ENCODE measurements at regions of chr2 and their contacts with region 1.

Region 1: DNA sequence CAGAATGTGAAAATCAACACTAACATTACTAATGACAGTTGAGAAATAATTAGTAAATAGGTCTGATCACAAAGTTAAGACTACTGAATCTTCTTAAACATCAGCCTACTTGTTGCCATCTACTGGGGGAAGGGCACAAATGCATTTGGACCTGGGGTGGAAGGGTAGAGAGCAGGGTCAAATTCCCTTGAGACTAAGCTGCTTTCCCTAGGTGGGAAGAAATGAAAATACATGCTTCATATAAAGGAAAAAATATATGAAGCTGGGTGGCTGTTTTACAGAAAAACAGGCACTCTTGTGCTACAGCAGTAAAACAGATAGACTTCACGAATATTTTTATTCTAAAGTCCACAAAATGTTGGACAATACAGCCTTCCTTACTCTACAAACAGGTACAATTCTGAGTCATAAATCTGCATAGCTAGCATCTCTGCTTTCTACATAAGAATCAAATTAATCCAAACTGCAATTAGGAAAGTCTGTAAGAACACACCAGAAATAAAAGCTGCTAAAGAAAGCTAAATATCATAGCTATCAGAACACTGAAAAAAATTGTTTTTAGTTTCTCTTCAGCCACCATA is 10.9 kb downstream of the TRIP12 start:
- DNase-seq: no peak
- ATAC-seq: peak; percentile 45; the same call in 1 of the 2 replicates
- H3K4me3 ChIP-seq: no peak overlapping the region
- H3K27ac ChIP-seq: no peak overlapping the region
- H3K4me1 ChIP-seq: peaks cover 7% of the 10 kb centered on the region; the same call in 1 of the 2 replicates
- H3K27me3 ChIP-seq: no peaks in the 10 kb centered on the region
- CTCF ChIP-seq: 0 out of 2 replicates have a peak, but pooled peaks have one; percentile 9
- POLR2A ChIP-seq: no peak
- RAD21 ChIP-seq: no peak

Region 2: DNA sequence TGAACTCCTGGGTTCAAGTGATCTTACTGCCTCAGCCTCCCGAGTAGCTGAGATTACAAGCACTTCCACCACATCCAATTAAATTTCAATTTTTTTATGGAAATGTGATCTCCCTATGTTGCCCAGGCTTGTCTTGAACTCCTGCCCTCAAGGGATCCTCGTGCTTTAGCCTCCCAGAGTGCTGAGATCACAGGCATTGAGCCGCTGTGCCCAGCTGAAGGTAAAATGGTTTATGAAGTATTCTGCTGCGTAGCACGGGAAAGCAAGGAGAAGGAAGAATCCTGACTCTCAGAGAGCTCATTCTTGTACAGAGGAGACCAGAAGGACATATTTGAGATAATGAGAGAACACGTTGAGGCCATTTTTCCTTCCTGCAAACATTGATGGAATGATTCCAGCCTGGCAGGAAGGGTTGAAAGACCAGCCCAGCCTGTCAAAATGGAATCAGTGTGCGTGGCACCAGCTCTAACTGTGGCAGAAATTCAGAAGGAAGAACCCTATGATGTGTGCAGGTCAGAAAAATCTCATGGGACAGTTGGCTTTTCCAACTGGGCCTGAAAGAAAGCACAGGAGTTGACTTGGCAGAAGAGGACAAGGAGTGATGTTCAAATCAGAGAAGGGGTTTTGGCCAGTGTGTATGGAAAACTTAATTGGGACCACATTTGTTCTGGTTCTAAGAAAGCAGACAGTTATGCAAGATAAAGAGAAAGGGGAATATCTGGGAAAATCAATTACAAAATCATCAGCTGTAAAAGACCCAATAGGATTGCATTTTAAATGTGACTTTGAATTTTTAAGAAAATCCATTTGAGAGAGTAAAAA is 447.2 kb before region 1 on chr2:
- CTCF ChIA-PET with region 1: no interaction called
- POLR2A ChIA-PET with region 1: no interaction called
- dilution Hi-C with region 1: no loop called
- in situ Hi-C with region 1: no loop called
- intact Hi-C with region 1: no loop called
- DNase-seq: no peak
- ATAC-seq: no peak
- H3K4me3 ChIP-seq: no peak overlapping the region
- H3K27ac ChIP-seq: no peak overlapping the region
- H3K4me1 ChIP-seq: no peaks in the 10 kb centered on the region
- H3K27me3 ChIP-seq: no peaks in the 10 kb centered on the region
- CTCF ChIP-seq: no peak
- POLR2A ChIP-seq: no peak
- RAD21 ChIP-seq: no peak

Region 3: GRCh38 chr2:229642371-229642770 is 268.6 kb before region 1 on chr2:
- CTCF ChIA-PET with region 1: no interaction called
- POLR2A ChIA-PET with region 1: no interaction called
- dilution Hi-C with region 1: no loop called
- in situ Hi-C with region 1: no loop called
- intact Hi-C with region 1: no loop called
- DNase-seq: no peak
- ATAC-seq: no peak
- H3K4me3 ChIP-seq: no peak overlapping the region
- H3K27ac ChIP-seq: no peak overlapping the region
- H3K4me1 ChIP-seq: no peaks in the 10 kb centered on the region
- H3K27me3 ChIP-seq: no peaks in the 10 kb centered on the region
- CTCF ChIP-seq: no peak
- POLR2A ChIP-seq: no peak
- RAD21 ChIP-seq: no peak

Region 4: GRCh38 chr2:229740279-229740678 is 170.6 kb before region 1 on chr2:
- CTCF ChIA-PET with region 1: no interaction called
- POLR2A ChIA-PET with region 1: no interaction called
- dilution Hi-C with region 1: no loop called
- in situ Hi-C with region 1: no loop called
- intact Hi-C with region 1: no loop called
- DNase-seq: no peak
- ATAC-seq: no peak
- H3K4me3 ChIP-seq: no peak overlapping the region
- H3K27ac ChIP-seq: no peak overlapping the region
- H3K4me1 ChIP-seq: no peaks in the 10 kb centered on the region
- H3K27me3 ChIP-seq: no peaks in the 10 kb centered on the region
- CTCF ChIP-seq: no peak
- POLR2A ChIP-seq: no peak
- RAD21 ChIP-seq: no peak

Region 5: DNA sequence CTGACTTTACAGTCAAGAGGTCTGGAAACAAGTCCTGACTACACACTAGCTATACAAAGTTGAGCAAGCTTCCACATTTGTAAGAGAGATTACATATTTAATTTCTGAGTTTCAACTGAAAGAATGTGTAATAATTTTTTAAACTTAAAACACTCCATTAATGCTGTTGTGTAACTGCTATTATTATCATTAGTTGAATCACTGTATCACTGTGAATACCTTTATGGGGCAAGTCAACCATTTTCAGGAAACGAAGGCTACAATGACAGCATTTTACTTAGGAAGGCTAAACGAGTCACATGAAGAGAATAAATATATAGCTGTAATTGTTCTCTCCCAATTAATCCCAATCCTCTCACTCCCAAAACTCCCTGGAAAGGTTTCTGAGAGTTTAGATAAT is 35.4 kb before region 1 on chr2:
- CTCF ChIA-PET with region 1: no interaction called
- POLR2A ChIA-PET with region 1: no interaction called
- dilution Hi-C with region 1: no loop called
- in situ Hi-C with region 1: no loop called
- intact Hi-C with region 1: loop called (anchors 5 kb)
- DNase-seq: no peak
- ATAC-seq: no peak
- H3K4me3 ChIP-seq: no peak overlapping the region
- H3K27ac ChIP-seq: no peak overlapping the region
- H3K4me1 ChIP-seq: no peaks in the 10 kb centered on the region
- H3K27me3 ChIP-seq: no peaks in the 10 kb centered on the region
- CTCF ChIP-seq: no peak
- POLR2A ChIP-seq: no peak
- RAD21 ChIP-seq: no peak

Region 6: GRCh38 chr2:229974266-229974665 is 63.3 kb after region 1 on chr2:
- CTCF ChIA-PET with region 1: interaction called, 10 read pairs
- POLR2A ChIA-PET with region 1: no interaction called
- dilution Hi-C with region 1: no loop called
- in situ Hi-C with region 1: no loop called
- intact Hi-C with region 1: no loop called
- DNase-seq: peak; percentile 78
- ATAC-seq: peak; percentile 95
- H3K4me3 ChIP-seq: no peak overlapping the region
- H3K27ac ChIP-seq: peak overlapping the region; percentile 14; the same call in 1 of the 2 replicates
- H3K4me1 ChIP-seq: peaks cover 2% of the 10 kb centered on the region; the same call in 1 of the 2 replicates
- H3K27me3 ChIP-seq: no peaks in the 10 kb centered on the region
- CTCF ChIP-seq: peak; percentile 38; the same call in 1 of the 2 replicates
- POLR2A ChIP-seq: no peak
- RAD21 ChIP-seq: peak; percentile 18; the same call in 1 of the 2 replicates

Region 7: DNA sequence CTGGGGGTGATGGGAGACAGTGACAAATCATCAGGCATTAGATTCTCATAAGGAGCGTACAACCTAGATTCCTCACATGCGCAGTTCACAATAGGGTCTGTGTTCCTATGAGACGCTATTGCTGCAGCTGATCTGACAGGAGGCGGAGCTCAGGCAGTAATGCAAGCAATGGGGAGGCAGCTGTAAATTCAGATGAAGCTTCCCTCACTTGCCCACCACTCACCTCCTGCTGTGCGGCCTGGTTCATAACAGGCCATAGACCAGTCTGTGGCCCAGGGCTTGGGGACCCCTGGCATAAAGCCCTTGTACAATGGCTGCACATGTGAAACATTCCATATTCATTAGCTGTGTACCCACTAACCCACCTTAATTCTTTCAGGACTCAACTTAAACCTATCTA is 1601.3 kb after region 1 on chr2:
- CTCF ChIA-PET with region 1: no interaction called
- POLR2A ChIA-PET with region 1: no interaction called
- dilution Hi-C with region 1: no loop called
- in situ Hi-C with region 1: no loop called
- intact Hi-C with region 1: no loop called
- DNase-seq: no peak
- ATAC-seq: no peak
- H3K4me3 ChIP-seq: no peak overlapping the region
- H3K27ac ChIP-seq: no peak overlapping the region
- H3K4me1 ChIP-seq: 0 out of 2 replicates have a peak, but pooled peaks cover 2% of the 10 kb centered on the region
- H3K27me3 ChIP-seq: no peaks in the 10 kb centered on the region
- CTCF ChIP-seq: no peak
- POLR2A ChIP-seq: no peak
- RAD21 ChIP-seq: no peak